Activated T-helper 1 cell treated with anti-CD3 and anti-CD28 coated beads, Interleukin-12 subunit alpha, Interleukin-12 subunit beta, Interleukin-2, Interleukin-4 antibody, amounts not matched to agents 30 ng/mL and 10 ng/mL and 1 ng/mL, durations not matched to agents 14 hours and 24 hours and 36 hours (primary cell): ENCODE measurements at regions of chr6 and their contacts with region 1.

Region 1: GRCh38 chr6:90296346-90297114 is at the start of gene BACH2:
- DNase-seq: peak; percentile 88
- H3K4me3 Mint-ChIP-seq: peak within 1 kb of the TSS; percentile 93
- H3K27ac Mint-ChIP-seq: peak within 1 kb of the TSS; percentile 95
- H3K4me1 Mint-ChIP-seq: peaks cover 39% of the 10 kb centered on the region
- H3K27me3 Mint-ChIP-seq: peaks cover 21% of the 10 kb centered on the region
- total RNA-seq, gene BACH2: 68.1 and 71.2 TPM in 2 replicates

Region 2: DNA sequence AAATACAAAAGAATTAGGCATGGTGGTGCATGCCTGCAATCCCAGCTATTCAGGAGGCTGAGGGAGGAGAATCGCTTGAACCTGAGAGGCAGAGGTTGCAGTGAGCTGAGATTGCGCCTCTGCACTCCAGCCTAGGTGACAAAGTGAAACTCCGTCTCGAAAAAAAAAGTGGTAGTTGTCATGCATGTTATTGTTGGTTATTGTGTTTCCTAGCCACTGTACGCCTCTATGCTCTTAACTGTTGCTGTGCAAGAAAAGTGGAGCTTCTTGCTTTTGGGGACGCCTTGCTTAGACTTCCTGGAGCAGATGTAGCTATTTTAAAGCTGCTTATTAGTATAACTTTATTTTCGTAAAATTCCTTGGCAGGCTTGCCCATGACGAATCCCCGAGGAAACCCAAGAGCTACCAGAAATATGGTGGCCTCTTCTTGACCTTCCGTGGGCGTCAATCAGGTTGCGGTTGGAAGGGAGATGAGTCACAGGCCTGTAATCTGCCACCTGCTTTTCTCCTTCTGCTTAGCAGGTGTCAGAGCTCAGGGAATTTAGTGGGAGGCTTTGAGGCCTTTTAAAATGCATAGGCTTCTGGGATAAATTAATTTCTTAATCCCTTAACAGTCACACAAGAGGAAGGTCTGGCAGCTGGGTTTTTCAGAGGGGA is 998.7 kb before region 1 on chr6:
- intact Hi-C with region 1: loop called (anchors 10 kb)
- DNase-seq: peak; percentile 64
- H3K4me3 Mint-ChIP-seq: peak overlapping the region; percentile 43
- H3K27ac Mint-ChIP-seq: peak overlapping the region; percentile 97
- H3K4me1 Mint-ChIP-seq: peaks cover 28% of the 10 kb centered on the region
- H3K27me3 Mint-ChIP-seq: peaks cover 2% of the 10 kb centered on the region

Region 3: GRCh38 chr6:89819336-89820130 is 477.0 kb before region 1 on chr6 and contains the start of gene MDN1:
- intact Hi-C with region 1: loop called (anchors 5 kb)
- DNase-seq: peak; percentile 89
- H3K4me3 Mint-ChIP-seq: peak within 1 kb of the TSS; percentile 87
- H3K27ac Mint-ChIP-seq: peak within 1 kb of the TSS; percentile 97
- H3K4me1 Mint-ChIP-seq: peaks cover 33% of the 10 kb centered on the region
- H3K27me3 Mint-ChIP-seq: no peaks in the 10 kb centered on the region
- total RNA-seq, gene MDN1: 74.6 and 77.9 TPM in 2 replicates

Region 4: DNA sequence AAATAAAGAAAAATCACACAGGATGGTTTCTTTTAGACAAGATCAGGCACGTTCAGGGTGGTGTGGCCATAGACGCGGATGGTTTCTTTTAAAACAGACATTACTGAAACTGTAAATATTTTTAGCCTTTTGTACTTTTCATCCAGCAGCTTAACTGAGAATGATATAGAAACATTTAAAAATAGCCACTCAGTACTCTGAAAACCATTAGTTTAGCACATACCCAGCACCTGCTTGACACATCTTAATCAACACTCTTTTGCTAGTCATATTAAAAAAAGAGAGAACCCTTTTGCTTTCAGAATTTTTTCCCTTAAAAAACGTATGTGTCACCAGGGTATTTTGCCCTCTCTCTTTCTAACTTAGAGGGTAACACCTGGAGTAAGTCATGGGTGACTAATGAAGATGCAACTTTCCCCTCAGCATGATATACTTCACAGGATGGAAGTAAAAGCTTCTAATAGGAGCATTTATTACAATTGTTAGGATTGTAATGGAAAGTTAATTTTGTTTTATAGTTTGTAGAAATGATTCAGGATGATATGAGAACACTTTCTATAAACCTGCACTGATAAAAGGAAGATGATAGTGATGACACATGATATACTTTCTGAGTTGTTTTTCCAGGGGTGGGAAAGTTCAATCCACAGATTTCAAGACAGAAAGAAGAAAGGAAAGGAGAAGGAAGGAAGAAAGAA is 45.1 kb before region 1 on chr6:
- intact Hi-C with region 1: loop called (anchors 1 kb)
- DNase-seq: no peak
- H3K4me3 Mint-ChIP-seq: peak overlapping the region; percentile 34
- H3K27ac Mint-ChIP-seq: peak overlapping the region; percentile 90
- H3K4me1 Mint-ChIP-seq: peaks cover 84% of the 10 kb centered on the region
- H3K27me3 Mint-ChIP-seq: peaks cover 2% of the 10 kb centered on the region

Region 5: GRCh38 chr6:90350689-90351554 is 54.4 kb after region 1 on chr6:
- intact Hi-C with region 1: loop called (anchors 1 kb)
- DNase-seq: peak; percentile 38
- H3K4me3 Mint-ChIP-seq: peak overlapping the region; percentile 39
- H3K27ac Mint-ChIP-seq: peak overlapping the region; percentile 78
- H3K4me1 Mint-ChIP-seq: peaks cover 46% of the 10 kb centered on the region
- H3K27me3 Mint-ChIP-seq: peaks cover 10% of the 10 kb centered on the region

Region 6: DNA sequence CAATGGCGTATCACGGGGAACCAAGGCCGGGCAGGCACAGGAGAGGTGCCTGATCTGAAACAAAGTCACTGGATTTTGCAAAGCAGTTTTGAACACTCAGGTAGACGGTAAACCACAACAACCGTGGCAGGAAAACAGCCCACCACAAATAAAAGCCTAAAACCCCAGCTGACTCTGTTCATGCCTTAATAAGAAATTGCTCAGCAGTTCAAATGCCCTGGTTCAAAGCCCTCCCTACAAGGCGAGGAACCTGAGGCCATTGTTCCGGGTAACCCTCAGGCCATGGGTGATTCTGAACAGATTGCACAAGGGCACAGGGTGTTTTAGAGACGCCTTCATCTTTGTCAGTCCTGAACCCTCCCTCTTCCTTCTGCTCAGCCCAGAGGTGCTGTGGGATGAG is 176.2 kb after region 1 on chr6:
- intact Hi-C with region 1: loop called (anchors 1 kb)
- DNase-seq: peak; percentile 52
- H3K4me3 Mint-ChIP-seq: peak overlapping the region; percentile 68
- H3K27ac Mint-ChIP-seq: peak overlapping the region; percentile 92
- H3K4me1 Mint-ChIP-seq: peaks cover 100% of the 10 kb centered on the region
- H3K27me3 Mint-ChIP-seq: no peaks in the 10 kb centered on the region